ENCODE measurements at regions of chr1 and their contacts with region 1.

Region 1: GRCh38 chr1:27388337-27389005 is 4.0 kb upstream of the GPR3 start:
- DNase-seq: peak; percentile 64

Region 2: GRCh38 chr1:27357281-27358037 is 31.0 kb before region 1 on chr1:
- CTCF ChIA-PET with region 1: interaction called, 10 read pairs
- POLR2A ChIA-PET with region 1: no interaction called
- DNase-seq: peak; percentile 91

Region 3: DNA sequence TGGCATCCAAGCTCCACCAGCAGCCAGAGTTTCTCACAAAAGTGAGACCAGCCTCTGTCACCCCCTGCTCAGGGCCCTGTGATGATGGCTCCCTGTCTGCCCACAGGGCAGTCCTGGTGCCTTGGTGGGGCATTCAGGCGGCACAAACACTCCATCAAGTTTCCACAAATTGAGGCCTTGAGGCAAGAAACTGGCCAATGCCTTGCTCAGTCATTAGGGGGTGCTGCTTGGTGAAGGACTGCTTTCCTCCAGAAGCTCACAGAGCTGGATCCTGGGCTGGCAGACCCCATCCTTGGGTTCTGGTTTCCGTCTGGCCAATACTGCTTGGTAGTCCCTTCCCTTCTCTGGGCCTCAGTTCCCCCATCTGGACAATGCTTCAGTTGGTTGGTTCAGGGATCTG is 228.0 kb after region 1 on chr1:
- CTCF ChIA-PET with region 1: no interaction called
- POLR2A ChIA-PET with region 1: no interaction called
- DNase-seq: no peak

Measured in HEK293T (cell line).